ENCODE measurements at regions of chr9 and their contacts with region 1.

Region 1: GRCh38 chr9:133992780-133993634 is 883 bp upstream of the VAV2 start:
- H3K4me3 ChIP-seq: peak overlapping the region; percentile 74
- H3K27ac ChIP-seq: peak overlapping the region; percentile 71; the same call in 1 of the 2 replicates
- H3K4me1 ChIP-seq: peaks cover 8% of the 10 kb centered on the region; the same call in 1 of the 2 replicates
- CTCF ChIP-seq: peak; percentile 95

Region 2: DNA sequence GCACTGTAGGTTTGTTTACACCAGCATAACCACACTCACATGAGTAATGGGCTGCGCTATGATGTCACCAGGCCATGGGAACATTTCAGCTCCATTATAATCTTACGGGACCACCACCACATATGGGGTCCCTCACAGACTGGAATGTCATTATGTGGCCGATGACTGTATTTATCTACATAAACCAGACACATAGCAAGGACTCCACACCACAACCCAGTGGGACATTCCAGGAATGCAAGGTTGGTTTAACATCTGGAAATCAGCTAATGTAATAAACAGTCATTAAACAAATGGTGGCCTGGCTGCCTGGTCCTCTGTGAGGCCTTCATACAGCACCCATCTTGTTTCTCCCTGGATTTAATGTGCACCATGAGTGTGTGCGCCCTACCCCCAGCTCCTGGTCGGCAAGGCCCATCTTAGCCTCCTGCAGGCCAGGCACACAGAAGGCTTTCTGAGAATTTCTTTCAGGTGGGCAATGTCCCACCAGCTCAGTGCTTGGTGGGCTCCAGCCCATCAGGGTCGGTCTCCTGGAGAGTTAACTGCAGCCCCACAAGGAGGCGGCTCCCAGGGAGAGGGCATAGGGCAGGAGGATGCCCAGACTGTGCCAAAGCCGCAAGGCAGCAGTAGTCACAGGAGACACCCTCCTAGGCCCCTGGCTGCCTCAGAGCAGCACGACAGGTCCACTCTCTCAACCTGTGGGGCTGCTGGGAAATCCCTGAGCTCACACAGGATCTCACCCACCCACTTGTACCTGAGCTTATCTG is 218.9 kb before region 1 on chr9:
- CTCF ChIA-PET with region 1: interaction called, 12 read pairs
- POLR2A ChIA-PET with region 1: no interaction called
- H3K4me3 ChIP-seq: no peak overlapping the region
- H3K27ac ChIP-seq: no peak overlapping the region
- H3K4me1 ChIP-seq: no peaks in the 10 kb centered on the region
- CTCF ChIP-seq: no peak

Region 3: DNA sequence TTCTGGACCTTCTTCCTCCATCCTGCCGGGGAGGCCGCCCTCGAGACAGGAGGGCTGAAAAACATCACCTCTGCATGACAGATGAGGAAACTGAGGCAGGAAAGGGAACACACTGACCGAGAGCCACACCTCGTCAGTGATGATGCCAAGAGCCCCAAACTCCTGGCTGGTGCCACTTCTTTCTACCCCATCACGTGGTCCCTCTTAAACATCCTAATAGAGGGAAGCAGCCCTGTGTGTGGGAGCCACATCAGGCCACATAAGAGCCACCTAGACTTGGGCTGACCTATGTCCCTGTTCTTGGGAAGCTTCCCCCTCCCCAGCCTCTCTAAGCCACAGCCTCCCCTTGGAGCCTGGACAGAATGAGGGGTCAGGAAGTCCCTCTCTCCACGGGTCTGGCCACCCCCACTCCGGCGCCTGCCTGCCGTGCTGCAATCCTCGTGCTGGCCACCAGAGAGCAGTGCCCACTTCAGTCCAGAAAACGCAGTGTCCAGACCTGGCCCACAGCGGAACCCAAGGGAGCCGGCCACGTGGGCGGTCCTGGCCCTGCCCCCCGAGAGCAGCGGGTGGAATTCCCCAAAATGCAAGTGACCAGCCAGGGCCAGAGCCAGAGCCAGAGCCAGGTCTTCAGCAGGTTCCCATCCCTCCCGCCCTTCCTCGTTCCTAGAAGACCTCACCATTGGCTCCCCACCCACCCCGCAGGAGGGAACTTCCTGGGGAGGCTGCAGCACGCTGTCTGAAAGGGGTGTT is 200.1 kb before region 1 on chr9:
- CTCF ChIA-PET with region 1: interaction called, 136 read pairs
- POLR2A ChIA-PET with region 1: interaction called, 3 read pairs
- H3K4me3 ChIP-seq: no peak overlapping the region
- H3K27ac ChIP-seq: no peak overlapping the region
- H3K4me1 ChIP-seq: no peaks in the 10 kb centered on the region
- CTCF ChIP-seq: peak; percentile 60

Region 4: GRCh38 chr9:133818444-133818843 is 174.6 kb before region 1 on chr9:
- CTCF ChIA-PET with region 1: interaction called, 11 read pairs
- POLR2A ChIA-PET with region 1: no interaction called
- H3K4me3 ChIP-seq: no peak overlapping the region
- H3K27ac ChIP-seq: no peak overlapping the region
- H3K4me1 ChIP-seq: no peaks in the 10 kb centered on the region
- CTCF ChIP-seq: no peak

Region 5: DNA sequence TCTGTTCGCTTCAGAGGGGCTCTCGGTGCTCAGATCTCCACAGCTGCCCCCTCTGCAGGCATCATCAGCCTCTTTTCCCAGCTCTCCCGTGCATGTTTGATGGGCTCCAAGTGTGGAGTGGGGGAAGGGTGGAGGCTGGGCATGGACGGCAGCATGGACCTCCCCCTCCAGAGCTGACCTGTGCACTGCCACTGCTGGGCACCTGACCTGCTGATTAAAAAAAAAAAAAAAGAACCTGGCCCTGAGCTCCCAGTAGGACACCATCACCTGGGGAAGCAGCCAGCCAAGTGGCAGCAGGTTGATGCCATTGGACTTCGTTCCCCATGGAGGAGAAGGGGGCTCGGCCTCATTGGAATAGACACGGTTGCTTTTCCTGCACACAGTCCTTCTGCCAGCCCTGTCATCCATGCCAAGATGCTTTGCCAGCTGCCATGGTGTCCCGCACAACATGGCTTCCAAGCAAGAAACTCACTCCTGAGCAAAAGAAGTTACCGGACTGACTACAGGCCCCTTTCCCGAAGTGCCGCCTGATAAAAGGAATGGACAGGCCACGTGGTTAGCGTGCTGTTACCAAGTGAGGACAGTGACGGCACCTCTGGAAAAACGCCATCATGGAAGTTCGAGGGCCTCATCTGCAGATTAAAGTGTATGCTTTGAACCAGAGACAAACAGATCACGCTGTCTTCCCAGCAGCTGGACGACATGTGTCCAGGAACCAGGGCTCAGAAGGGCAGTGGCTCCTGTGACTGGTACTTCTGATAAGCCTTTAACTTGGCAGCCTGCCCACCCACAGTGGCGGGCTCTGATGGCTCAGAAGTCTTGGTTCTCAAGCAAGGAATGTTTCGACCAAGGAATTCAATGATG is 17.5 kb after region 1 on chr9:
- CTCF ChIA-PET with region 1: interaction called, 20 read pairs
- POLR2A ChIA-PET with region 1: no interaction called
- H3K4me3 ChIP-seq: no peak overlapping the region
- H3K27ac ChIP-seq: no peak overlapping the region
- H3K4me1 ChIP-seq: no peaks in the 10 kb centered on the region
- CTCF ChIP-seq: no peak

Region 6: DNA sequence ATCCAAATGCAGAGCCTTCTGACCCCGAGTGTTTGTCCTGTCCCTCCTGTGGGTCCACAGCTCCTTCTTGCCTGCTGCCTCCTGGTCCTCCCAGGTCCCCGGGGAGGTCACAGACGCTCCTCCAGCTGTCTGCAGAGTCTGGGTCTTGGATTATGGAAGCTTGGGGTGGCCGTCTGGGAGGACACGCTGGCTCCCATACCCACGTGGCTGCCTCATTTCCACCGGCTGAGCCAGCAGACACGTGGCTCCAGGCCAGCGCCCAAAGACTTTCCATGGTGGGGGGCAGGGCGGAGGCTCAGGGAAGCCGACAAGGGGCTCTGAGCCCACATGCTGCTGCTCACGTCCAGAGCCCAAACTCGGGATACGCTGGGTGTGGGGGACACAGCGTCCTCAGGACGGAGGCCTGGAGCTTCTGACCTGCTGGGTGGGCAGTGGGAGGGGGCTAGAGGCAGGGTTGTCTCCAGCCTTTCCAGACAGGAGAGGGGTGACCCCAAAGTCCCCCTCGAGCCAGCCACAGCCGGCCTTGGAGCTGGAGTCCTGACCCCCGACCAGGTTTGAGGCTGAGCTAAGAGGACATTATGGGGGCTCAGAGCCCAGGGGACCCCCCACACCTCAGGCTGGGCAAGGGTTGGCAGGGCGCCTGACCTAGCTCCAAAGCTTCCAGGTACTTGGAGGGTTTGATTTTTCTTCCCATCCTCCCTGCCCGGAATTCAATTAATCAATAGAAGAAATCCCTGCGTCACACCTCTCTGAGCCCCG is 195.6 kb after region 1 on chr9:
- CTCF ChIA-PET with region 1: no interaction called
- POLR2A ChIA-PET with region 1: no interaction called
- H3K4me3 ChIP-seq: no peak overlapping the region
- H3K27ac ChIP-seq: no peak overlapping the region
- H3K4me1 ChIP-seq: no peaks in the 10 kb centered on the region
- CTCF ChIP-seq: no peak

Region 7: GRCh38 chr9:134358662-134359319 is 365.8 kb after region 1 on chr9:
- CTCF ChIA-PET with region 1: no interaction called
- POLR2A ChIA-PET with region 1: no interaction called
- H3K4me3 ChIP-seq: no peak overlapping the region
- H3K27ac ChIP-seq: no peak overlapping the region
- H3K4me1 ChIP-seq: no peaks in the 10 kb centered on the region; the same call in 1 of the 2 replicates
- CTCF ChIP-seq: no peak